ENCODE measurements at regions of chr2 and their contacts with region 1.

Region 1: DNA sequence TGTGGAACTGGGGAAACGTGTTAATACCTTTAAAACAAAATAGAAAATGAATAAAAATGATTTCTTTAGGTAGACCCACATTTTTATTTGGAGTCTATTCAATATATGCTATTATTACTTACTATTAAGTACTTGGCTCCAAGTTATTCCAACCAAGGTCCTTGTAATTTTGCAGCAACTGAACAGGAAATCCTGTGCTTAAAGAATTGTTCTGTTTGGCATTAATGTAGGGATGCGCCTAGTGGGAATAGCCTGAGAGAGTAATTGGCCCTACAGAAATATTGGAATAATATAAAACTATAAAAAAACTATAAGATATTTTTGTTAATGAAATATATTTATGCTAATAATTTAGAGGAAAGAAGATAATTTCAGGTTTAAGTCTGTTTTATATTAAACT is 22.9 kb upstream of the ZSWIM2 start:
- DNase-seq: no peak
- H3K4me3 ChIP-seq: no peak overlapping the region
- H3K27ac ChIP-seq: no peak overlapping the region
- H3K4me1 ChIP-seq: no peaks in the 10 kb centered on the region
- H3K27me3 ChIP-seq: no peaks in the 10 kb centered on the region
- CTCF ChIP-seq: no peak
- EP300 ChIP-seq: no peak
- POLR2A ChIP-seq: no peak

Region 2: GRCh38 chr2:188623995-188624643 is 1752.2 kb after region 1 on chr2:
- intact Hi-C with region 1: loop called in 1 of 4 experiments (anchors 5 kb)
- DNase-seq: no peak
- H3K4me3 ChIP-seq: no peak overlapping the region
- H3K27ac ChIP-seq: peak overlapping the region in 1 of 2 donors; percentile 10
- H3K4me1 ChIP-seq: no peaks in the 10 kb centered on the region
- H3K27me3 ChIP-seq: no peaks in the 10 kb centered on the region
- CTCF ChIP-seq: no peak
- EP300 ChIP-seq: no peak
- POLR2A ChIP-seq: no peak